CD4-positive, alpha-beta memory T cell (primary cell): ENCODE measurements at regions of chr20 and their contacts with region 1.

Region 1: DNA sequence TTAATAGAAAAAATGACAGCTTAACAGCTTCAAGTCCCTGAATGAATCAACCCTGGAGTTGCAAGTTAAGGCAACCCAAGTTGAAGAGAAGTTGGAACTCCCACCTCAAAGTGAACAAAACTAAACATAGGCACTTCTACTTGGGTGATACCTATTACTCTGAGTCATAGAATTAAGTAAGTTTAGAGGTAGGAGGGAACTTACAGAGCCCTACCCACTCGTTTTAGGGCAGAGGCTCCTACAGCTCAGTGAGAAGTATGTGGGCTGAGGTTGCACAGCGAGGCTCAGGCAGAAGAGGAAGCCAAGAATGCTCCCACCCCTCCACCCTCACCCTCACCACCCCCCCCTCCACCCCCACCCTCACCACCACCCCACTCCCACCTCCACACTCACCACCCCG is 42.2 kb downstream of the NFATC2 start:
- DNase-seq: peak; percentile 55 to 85 (median 64)
- H3K4me3 ChIP-seq: no peak overlapping the region
- H3K4me3 Mint-ChIP-seq: peak overlapping the region in 5 of 8 donors; percentile 14 to 88 (median 62)
- H3K27ac ChIP-seq: peak overlapping the region; percentile 16
- H3K27ac Mint-ChIP-seq: peak overlapping the region; percentile 90 to 99 (median 97)
- H3K4me1 ChIP-seq: peaks cover 80% of the 10 kb centered on the region
- H3K4me1 Mint-ChIP-seq: peaks cover 70 to 88% (median 79%) of the 10 kb centered on the region in 4 donors
- H3K27me3 ChIP-seq: no peaks in the 10 kb centered on the region
- H3K27me3 Mint-ChIP-seq: no peaks in the 10 kb centered on the region

Region 2: GRCh38 chr20:51404298-51405060 is 95.8 kb before region 1 on chr20:
- CTCF ChIA-PET with region 1: interaction called, 3 read pairs
- POLR2A ChIA-PET with region 1: interaction called, 8 read pairs
- intact Hi-C with region 1: loop called (anchors 2 kb)
- DNase-seq: peak; percentile 86 to 98 (median 90)
- H3K4me3 ChIP-seq: no peak overlapping the region
- H3K4me3 Mint-ChIP-seq: peak overlapping the region in 7 of 8 donors; percentile 43 to 94 (median 78)
- H3K27ac ChIP-seq: peak overlapping the region; percentile 96
- H3K27ac Mint-ChIP-seq: peak overlapping the region; percentile 99 to 100 (median 100)
- H3K4me1 ChIP-seq: peaks cover 97% of the 10 kb centered on the region
- H3K4me1 Mint-ChIP-seq: peaks cover 64 to 92% (median 77%) of the 10 kb centered on the region in 4 donors
- H3K27me3 ChIP-seq: no peaks in the 10 kb centered on the region
- H3K27me3 Mint-ChIP-seq: no peaks in the 10 kb centered on the region

Region 3: DNA sequence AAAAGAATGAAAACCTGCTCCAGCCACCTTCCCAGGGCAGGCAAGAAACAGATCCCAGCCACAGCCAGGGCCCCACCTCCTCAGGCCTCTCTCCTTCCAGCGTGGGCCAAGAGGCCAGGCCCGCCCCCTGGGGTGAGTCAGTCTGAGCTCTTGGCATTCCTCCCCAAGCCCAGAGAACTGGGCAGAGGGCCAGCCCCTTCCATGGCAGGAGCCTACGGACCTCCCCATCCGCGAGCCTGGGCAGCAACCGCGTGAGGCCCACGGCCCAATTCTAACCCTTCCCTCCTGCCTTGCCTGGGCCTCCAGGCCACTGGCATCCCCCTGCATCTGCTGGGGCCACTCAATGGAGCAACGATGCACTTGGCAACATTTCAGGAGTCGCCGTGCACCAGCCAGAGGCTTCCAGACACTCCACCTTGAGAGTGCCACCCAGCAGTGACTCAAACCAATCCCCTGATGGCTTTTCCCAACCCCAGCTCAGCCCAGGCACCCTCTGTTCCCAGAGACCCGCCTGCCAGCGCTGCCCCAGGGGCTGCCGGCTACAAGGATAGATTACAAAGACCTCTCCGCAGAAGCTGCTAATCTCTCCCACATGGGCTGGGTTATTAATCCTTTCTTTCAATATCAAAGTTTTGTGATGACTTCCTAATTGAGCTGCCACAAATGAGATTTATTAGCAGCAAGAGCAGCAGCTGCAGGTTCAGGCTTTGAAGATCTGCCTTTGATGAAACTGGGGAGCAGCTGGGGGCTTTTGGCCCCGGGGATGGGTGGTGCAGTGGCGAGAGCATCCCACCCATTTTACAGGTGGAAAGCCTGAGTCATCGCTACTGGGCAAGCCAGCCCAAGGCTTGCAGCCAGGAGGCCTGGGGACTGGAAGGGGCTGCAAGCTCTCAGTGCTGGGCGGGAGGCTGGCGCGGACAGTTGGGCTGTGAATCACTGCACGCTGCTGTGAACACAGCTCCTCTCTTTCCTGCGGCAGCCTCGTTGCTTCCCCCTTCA is 43.5 kb before region 1 on chr20:
- CTCF ChIA-PET with region 1: no interaction called
- POLR2A ChIA-PET with region 1: interaction called, 7 read pairs
- intact Hi-C with region 1: loop called (anchors 5 kb)
- DNase-seq: peak in 1 of 5 donors; percentile 44
- H3K4me3 ChIP-seq: no peak overlapping the region
- H3K4me3 Mint-ChIP-seq: peak overlapping the region in 7 of 8 donors; percentile 20 to 60 (median 52)
- H3K27ac ChIP-seq: no peak overlapping the region
- H3K27ac Mint-ChIP-seq: peak overlapping the region; percentile 36 to 78 (median 67)
- H3K4me1 ChIP-seq: peaks cover 20% of the 10 kb centered on the region
- H3K4me1 Mint-ChIP-seq: peaks cover 25 to 51% (median 29%) of the 10 kb centered on the region in 4 donors
- H3K27me3 ChIP-seq: no peaks in the 10 kb centered on the region
- H3K27me3 Mint-ChIP-seq: no peaks in the 10 kb centered on the region

Region 4: DNA sequence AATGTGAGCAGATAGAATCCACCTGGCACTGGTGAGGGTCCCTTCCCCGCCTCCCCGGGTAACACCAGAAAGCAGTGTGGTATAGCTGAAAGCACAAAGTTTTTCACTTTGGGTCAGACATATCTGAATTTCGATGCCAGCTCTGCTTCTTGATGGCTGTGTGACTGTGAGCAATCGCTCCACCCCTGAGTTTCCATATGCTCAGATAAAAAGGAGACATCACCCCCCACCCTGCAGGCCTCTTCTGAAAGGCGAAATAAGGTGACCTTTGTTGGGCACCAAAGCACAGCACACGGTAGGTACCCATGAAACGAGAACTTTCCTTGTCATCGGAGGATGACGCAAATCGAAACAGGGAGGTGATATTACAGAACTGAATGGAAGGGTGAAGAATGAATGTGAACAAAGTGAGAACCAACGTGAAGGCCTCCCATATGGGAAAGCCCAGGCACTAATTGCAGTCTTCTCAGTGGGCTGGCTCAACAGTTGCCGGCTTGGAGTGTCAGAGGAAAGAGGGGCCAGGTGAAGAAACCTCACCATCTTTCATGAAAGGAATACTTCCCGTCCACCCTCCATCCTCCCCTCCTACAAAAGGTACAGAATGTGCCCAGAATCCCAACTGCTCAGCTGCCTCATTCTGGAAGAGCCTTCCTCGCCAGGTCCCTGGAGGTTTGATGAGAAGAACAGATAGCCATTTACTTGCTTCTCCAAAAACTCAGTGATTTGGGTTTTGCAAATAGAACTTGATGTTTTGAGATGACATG is 19.6 kb before region 1 on chr20:
- CTCF ChIA-PET with region 1: interaction called, 3 read pairs
- POLR2A ChIA-PET with region 1: interaction called, 9 read pairs
- intact Hi-C with region 1: loop called (anchors 2 kb)
- DNase-seq: peak in 4 of 5 donors; percentile 20 to 75 (median 30)
- H3K4me3 ChIP-seq: peak overlapping the region in 1 of 2 donors; percentile 0
- H3K4me3 Mint-ChIP-seq: peak overlapping the region; percentile 78 to 86 (median 80)
- H3K27ac ChIP-seq: peak overlapping the region; percentile 70
- H3K27ac Mint-ChIP-seq: peak overlapping the region; percentile 79 to 97 (median 92)
- H3K4me1 ChIP-seq: peaks cover 57% of the 10 kb centered on the region
- H3K4me1 Mint-ChIP-seq: peaks cover 62 to 92% (median 80%) of the 10 kb centered on the region in 4 donors
- H3K27me3 ChIP-seq: no peaks in the 10 kb centered on the region
- H3K27me3 Mint-ChIP-seq: no peaks in the 10 kb centered on the region

Region 5: DNA sequence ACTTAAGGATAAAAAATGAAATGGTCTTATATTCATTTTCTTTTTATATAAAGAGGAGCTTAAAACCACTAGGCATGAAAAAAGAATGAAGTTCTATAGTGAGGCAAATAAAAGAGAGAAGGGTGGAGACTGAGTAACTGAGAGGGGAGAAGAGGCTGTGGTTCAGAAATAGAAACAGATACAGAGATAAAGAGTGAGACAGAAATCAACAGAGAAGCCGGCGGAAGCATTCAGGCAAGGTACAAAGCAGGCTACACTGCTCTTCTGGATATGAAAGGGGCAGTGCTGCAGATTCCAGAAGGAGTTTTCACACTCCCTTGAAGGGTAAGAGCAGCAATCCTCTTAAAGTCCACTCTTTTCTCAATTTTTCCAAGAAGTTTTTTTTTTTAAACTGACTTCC is 12.3 kb after region 1 on chr20:
- CTCF ChIA-PET with region 1: interaction called, 8 read pairs
- POLR2A ChIA-PET with region 1: interaction called, 84 read pairs
- intact Hi-C with region 1: loop called (anchors 1 kb)
- DNase-seq: peak in 3 of 5 donors; percentile 35 to 50 (median 35)
- H3K4me3 ChIP-seq: no peak overlapping the region
- H3K4me3 Mint-ChIP-seq: peak overlapping the region; percentile 33 to 71 (median 56)
- H3K27ac ChIP-seq: peak overlapping the region; percentile 31
- H3K27ac Mint-ChIP-seq: peak overlapping the region; percentile 55 to 95 (median 85)
- H3K4me1 ChIP-seq: peaks cover 86% of the 10 kb centered on the region
- H3K4me1 Mint-ChIP-seq: peaks cover 63 to 91% (median 75%) of the 10 kb centered on the region in 4 donors
- H3K27me3 ChIP-seq: no peaks in the 10 kb centered on the region
- H3K27me3 Mint-ChIP-seq: no peaks in the 10 kb centered on the region

Region 6: GRCh38 chr20:51531141-51531710 is 30.9 kb after region 1 on chr20:
- CTCF ChIA-PET with region 1: interaction called, 3 read pairs
- POLR2A ChIA-PET with region 1: interaction called, 6 read pairs
- intact Hi-C with region 1: loop called (anchors 1 kb)
- DNase-seq: peak; percentile 41 to 94 (median 49)
- H3K4me3 ChIP-seq: no peak overlapping the region
- H3K4me3 Mint-ChIP-seq: peak overlapping the region; percentile 46 to 97 (median 76)
- H3K27ac ChIP-seq: peak overlapping the region; percentile 80
- H3K27ac Mint-ChIP-seq: peak overlapping the region; percentile 97 to 99 (median 98)
- H3K4me1 ChIP-seq: peaks cover 96% of the 10 kb centered on the region
- H3K4me1 Mint-ChIP-seq: peaks cover 74 to 100% (median 86%) of the 10 kb centered on the region in 4 donors
- H3K27me3 ChIP-seq: no peaks in the 10 kb centered on the region
- H3K27me3 Mint-ChIP-seq: no peaks in the 10 kb centered on the region